Dorsolateral prefrontal cortex (tissue), 120 donors: ENCODE measurements at regions of chr3 and their contacts with region 1.

Region 1: GRCh38 chr3:179322286-179323196 is at the start of gene ZNF639:
- DNase-seq: peak; percentile 39 to 85 (median 67)
- H3K4me3 ChIP-seq: peak within 1 kb of the TSS; percentile 63 to 98 (median 89)
- H3K27ac ChIP-seq: peak within 1 kb of the TSS; percentile 59 to 98 (median 94)
- H3K27me3 ChIP-seq: no peaks in the 10 kb centered on the region
- CTCF ChIP-seq: peak; percentile 49 to 92 (median 76)
- total RNA-seq, gene ZNF639: 23.7 to 44.6 (median 31.9) TPM

Region 2: DNA sequence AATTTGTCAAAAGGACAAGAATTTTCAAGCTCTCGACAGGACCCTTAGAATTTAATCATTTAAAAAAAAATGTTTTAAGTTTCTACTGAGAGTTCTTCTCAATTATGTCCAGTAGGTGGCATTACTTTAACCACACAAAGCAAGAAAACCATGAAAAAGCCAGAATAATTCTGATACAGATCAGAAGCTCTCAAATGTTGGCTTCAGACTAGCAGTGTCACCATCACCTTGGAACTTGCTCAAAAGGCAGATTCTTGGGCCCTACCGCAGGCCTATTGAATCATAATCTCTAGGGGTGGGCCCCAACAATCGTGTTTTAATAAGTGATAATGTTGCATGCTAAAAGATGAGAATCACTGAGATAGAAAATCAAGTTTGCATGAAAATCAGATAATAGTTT is 885.8 kb before region 1 on chr3:
- intact Hi-C with region 1: loop called in 1 of 2 experiments (anchors 10 kb)
- DNase-seq: no peak
- H3K4me3 ChIP-seq: no peak overlapping the region
- H3K27ac ChIP-seq: no peak overlapping the region
- H3K27me3 ChIP-seq: no peaks in the 10 kb centered on the region
- CTCF ChIP-seq: peak; percentile 52 to 85 (median 72)

Region 3: DNA sequence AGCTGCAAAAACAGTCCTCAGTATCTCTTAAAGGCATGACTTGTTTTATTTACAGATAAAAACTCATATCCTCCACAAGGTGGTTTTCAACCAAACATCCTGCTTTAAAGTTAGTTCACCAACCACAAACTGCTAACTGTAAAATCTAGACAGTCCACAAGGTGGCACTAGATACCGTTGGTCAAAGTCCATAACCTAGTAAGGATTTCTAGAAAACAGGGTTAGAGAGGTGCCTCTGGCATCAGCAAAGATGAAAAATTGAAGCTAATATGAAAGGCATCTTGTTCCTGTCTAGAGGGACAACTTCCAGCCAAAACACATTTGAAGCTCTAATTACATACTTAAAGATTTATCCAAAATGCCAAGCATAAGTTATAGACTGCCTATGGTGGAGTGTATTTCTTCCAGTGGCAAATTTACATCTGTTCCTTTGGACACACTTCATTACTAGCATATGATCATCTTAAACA is 307.0 kb before region 1 on chr3:
- intact Hi-C with region 1: loop called (anchors 2 to 5 kb)
- DNase-seq: peak in 2 of 10 donors; percentile 31 to 43
- H3K4me3 ChIP-seq: no peak overlapping the region
- H3K27ac ChIP-seq: peak overlapping the region in 3 of 59 donors; percentile 9 to 48 (median 11)
- H3K27me3 ChIP-seq: no peaks in the 10 kb centered on the region
- CTCF ChIP-seq: peak; percentile 78 to 98 (median 92)

Region 4: GRCh38 chr3:179071550-179072397 is 250.8 kb before region 1 on chr3 and contains the start of gene ZMAT3:
- intact Hi-C with region 1: loop called (anchors 5 kb)
- DNase-seq: peak; percentile 76 to 95 (median 86)
- H3K4me3 ChIP-seq: peak within 1 kb of the TSS; percentile 55 to 98 (median 86)
- H3K27ac ChIP-seq: peak within 1 kb of the TSS; percentile 11 to 96 (median 89)
- H3K27me3 ChIP-seq: no peaks in the 10 kb centered on the region
- CTCF ChIP-seq: peak in 32 of 56 donors; percentile 4 to 54 (median 33)
- total RNA-seq, gene ZMAT3: 40.9 to 107 (median 77.8) TPM

Region 5: GRCh38 chr3:179105881-179106280 is 216.7 kb before region 1 on chr3:
- intact Hi-C with region 1: loop called in 1 of 2 experiments (anchors 1 kb)
- DNase-seq: no peak
- H3K4me3 ChIP-seq: no peak overlapping the region
- H3K27ac ChIP-seq: no peak overlapping the region
- H3K27me3 ChIP-seq: no peaks in the 10 kb centered on the region
- CTCF ChIP-seq: no peak

Region 6: DNA sequence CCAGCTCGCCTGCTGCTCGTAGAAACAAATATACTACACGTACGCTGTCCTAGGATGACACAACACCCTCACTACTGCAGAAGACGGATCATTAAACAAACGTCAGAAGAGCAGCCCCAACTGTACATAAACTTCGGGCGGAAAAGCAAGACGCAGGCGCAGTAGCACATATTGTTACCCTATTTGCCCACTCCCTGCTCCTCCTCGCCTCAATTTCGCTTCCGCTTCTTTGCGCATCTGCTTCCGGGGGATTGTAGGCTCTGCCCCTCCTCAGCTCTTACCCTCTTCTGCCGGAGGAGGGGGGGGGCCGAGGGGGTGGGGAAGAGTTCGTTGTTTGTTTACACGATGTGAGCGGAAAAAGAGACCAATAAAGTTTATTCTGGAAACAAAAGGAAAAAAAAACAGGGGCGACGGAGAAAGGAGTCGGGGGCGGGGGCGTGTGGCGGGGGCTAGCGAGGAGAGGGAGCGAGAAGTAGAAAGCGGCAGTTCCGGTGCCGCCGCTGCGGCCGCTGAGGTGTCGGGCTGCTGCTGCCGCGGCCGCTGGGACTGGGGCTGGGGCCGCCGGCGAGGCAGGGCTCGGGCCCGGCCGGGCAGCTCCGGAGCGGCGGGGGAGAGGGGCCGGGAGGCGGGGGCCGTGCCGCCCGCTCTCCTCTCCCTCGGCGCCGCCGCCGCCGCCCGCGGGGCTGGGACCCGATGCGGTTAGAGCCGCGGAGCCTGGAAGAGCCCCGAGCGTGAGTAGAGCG is 174.5 kb before region 1 on chr3 and contains the start of gene PIK3CA:
- intact Hi-C with region 1: loop called (anchors 2 kb)
- DNase-seq: peak; percentile 89 to 98 (median 96)
- H3K4me3 ChIP-seq: peak within 1 kb of the TSS; percentile 61 to 99 (median 93)
- H3K27ac ChIP-seq: peak within 1 kb of the TSS; percentile 83 to 99 (median 97)
- H3K27me3 ChIP-seq: no peaks in the 10 kb centered on the region
- CTCF ChIP-seq: peak in 5 of 56 donors; percentile 3 to 13 (median 7)
- total RNA-seq, gene PIK3CA: 25.8 to 58.1 (median 42.6) TPM

Region 7: GRCh38 chr3:179200790-179201189 is 121.8 kb before region 1 on chr3:
- intact Hi-C with region 1: no loop called
- DNase-seq: no peak
- H3K4me3 ChIP-seq: no peak overlapping the region
- H3K27ac ChIP-seq: no peak overlapping the region
- H3K27me3 ChIP-seq: no peaks in the 10 kb centered on the region
- CTCF ChIP-seq: no peak

Region 8: GRCh38 chr3:179347345-179348194 is 25.0 kb after region 1 on chr3 and contains the start of gene MFN1:
- intact Hi-C with region 1: loop called (anchors 1 kb)
- DNase-seq: peak; percentile 84 to 97 (median 95)
- H3K4me3 ChIP-seq: peak within 1 kb of the TSS; percentile 62 to 99 (median 85)
- H3K27ac ChIP-seq: peak within 1 kb of the TSS in 57 of 59 donors; percentile 27 to 92 (median 85)
- H3K27me3 ChIP-seq: no peaks in the 10 kb centered on the region
- CTCF ChIP-seq: peak in 28 of 56 donors; percentile 3 to 49 (median 25)
- total RNA-seq, gene MFN1: 33.7 to 79.8 (median 60.2) TPM